Naive thymus-derived CD8-positive, alpha-beta T cell (primary cell): ENCODE measurements at regions of chr1 and their contacts with region 1.

Region 1: DNA sequence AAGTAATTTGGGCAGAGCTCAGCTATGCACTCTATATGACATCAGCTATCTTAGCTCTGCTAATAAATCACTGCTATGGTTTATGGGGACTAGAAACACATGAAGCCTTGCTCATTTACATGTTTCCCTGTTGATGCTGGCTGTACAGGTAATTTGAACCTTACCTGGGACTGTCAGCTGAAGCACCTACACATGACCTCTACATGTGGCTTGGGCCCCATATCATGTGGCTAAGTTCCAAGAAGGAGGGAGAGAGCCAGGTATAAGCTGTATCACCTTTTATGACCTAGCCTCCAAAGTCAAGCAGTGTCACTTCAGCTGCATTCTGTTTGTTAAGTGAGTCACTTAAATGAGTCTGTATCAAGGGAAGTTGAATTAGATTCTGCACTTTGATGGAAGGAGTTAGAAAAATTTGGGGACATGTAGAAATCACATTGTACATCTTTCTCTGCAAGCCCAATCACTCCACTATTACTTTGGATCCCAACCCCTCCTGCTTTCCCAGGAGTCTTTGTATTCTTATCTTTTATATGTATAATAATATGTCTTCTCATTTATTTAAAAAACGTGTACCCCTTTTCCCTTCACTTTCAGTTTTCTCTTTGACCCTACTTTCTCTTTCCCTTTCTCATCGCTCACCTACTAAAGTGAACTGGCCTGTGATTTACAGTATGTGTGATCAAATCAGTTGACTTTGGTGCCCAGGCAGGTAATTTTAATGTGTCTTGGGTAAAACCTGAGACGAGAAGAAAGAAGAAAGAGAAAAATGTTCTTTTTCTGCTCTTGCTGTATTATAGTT is 53.4 kb upstream of the PRKACB start:
- DNase-seq: peak in 3 of 10 donors; percentile 52 to 58 (median 55)
- ATAC-seq: peak; percentile 77 to 82
- H3K4me3 Mint-ChIP-seq: peak overlapping the region; percentile 71 to 85 (median 74)
- H3K27ac Mint-ChIP-seq: peak overlapping the region; percentile 35 to 95 (median 89)
- H3K4me1 Mint-ChIP-seq: peaks cover 15 to 31% (median 25%) of the 10 kb centered on the region in 4 donors
- H3K27me3 Mint-ChIP-seq: no peaks in the 10 kb centered on the region

Region 2: GRCh38 chr1:84077476-84078107 is 13.1 kb before region 1 on chr1:
- POLR2A ChIA-PET with region 1: interaction called, 15 read pairs
- DNase-seq: peak; percentile 62 to 86 (median 80)
- ATAC-seq: peak; percentile 86 to 90
- H3K4me3 Mint-ChIP-seq: peak overlapping the region; percentile 77 to 92 (median 88)
- H3K27ac Mint-ChIP-seq: peak overlapping the region; percentile 70 to 94 (median 90)
- H3K4me1 Mint-ChIP-seq: peaks cover 8 to 20% (median 13%) of the 10 kb centered on the region in 4 donors
- H3K27me3 Mint-ChIP-seq: no peaks in the 10 kb centered on the region